Panc1 (cell line): ENCODE measurements at regions of chr6 and their contacts with region 1.

Region 1: DNA sequence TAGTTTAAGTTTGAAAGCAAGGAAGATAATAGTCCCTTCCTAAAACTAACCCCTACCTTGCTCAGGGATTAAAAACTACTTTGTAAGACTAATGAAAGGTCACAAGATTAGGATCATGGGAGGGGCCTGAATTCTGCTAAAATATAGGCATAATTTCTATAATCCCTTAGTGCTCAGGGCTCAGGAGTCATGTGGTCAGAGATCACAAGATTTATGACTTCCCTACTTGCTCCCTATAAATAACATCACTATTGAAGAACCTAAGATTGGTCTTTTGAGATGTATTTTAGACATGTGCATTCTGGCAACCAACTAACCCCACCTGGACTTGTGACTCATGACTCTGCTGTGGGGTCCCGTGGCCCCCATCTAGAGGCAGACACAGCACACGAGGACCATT is 81.1 kb downstream of the STMND1 start:
- DNase-seq: no peak
- ATAC-seq: no peak
- H3K4me3 ChIP-seq: no peak overlapping the region
- H3K27ac ChIP-seq: no peak overlapping the region
- H3K4me1 ChIP-seq: no peaks in the 10 kb centered on the region
- H3K27me3 ChIP-seq: no peaks in the 10 kb centered on the region
- CTCF ChIP-seq: no peak

Region 2: DNA sequence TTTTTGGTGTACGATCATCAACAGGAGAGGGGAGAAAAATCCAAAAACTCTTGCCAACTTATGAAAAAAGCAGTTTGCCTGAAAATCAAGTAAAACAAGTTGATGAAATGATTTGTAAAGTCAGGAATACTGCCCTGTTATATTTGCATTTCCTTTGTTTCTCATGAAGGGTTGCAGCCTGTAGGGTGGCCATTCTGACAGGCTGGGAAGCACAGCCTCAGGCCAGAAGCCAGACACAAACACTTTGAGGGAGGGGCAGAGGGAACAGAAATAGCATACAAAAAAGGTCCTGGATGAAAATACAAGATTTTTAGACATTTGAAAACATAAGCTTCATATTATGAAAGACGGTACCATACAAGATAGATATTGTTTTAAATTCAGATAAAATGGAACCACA is 1629.9 kb before region 1 on chr6:
- CTCF ChIA-PET with region 1: interaction called, 10 read pairs
- POLR2A ChIA-PET with region 1: no interaction called
- in situ Hi-C with region 1: no loop called
- intact Hi-C with region 1: no loop called
- DNase-seq: no peak
- ATAC-seq: no peak
- H3K4me3 ChIP-seq: no peak overlapping the region
- H3K27ac ChIP-seq: no peak overlapping the region
- H3K4me1 ChIP-seq: no peaks in the 10 kb centered on the region
- H3K27me3 ChIP-seq: no peaks in the 10 kb centered on the region
- CTCF ChIP-seq: no peak

Region 3: GRCh38 chr6:16286148-16286522 is 896.8 kb before region 1 on chr6:
- CTCF ChIA-PET with region 1: no interaction called
- POLR2A ChIA-PET with region 1: no interaction called
- in situ Hi-C with region 1: no loop called
- intact Hi-C with region 1: no loop called
- DNase-seq: peak; percentile 28
- ATAC-seq: peak; percentile 71
- H3K4me3 ChIP-seq: no peak overlapping the region
- H3K27ac ChIP-seq: no peak overlapping the region
- H3K4me1 ChIP-seq: no peaks in the 10 kb centered on the region
- H3K27me3 ChIP-seq: no peaks in the 10 kb centered on the region
- CTCF ChIP-seq: peak; percentile 91

Region 4: DNA sequence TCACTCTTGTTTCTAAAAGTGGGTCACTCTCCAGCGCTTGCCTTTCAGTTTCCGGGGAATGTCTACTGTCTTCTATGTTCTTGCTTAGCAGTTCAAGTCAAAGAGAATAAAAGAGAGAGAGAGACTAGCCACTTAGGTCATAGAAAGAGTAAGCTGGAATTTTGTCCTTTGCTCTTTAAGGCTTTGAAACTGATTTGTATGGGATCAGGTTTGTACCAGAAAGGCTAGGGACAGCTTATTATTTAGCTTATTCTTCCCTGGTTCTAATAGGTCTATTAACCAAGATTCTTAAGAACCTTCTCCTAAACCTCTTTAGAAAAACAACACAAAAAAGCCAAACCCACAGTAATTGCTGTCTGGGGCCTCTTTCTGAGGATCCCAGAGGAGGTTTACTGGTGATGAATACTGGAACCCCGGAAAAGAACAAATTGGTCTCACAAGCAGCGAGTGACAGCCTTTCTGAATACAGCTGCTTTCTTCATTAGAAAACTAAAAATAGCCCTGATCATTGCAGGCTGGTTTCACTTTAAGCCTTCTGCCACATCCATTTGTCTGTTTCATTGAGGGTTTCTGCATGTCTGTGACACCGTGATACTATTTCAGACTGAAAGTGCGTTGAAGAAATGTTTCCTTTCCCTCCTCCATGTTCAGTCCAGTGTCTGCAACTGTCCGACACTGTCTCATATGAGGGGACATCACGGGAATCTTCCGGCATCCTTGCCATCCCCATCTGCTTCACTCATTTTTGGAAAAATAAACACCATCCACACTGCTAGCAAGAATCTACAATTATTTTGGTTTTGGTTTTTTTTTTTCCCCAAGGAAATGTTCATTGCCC is 346.6 kb before region 1 on chr6:
- CTCF ChIA-PET with region 1: no interaction called
- POLR2A ChIA-PET with region 1: no interaction called
- in situ Hi-C with region 1: no loop called
- intact Hi-C with region 1: no loop called
- DNase-seq: no peak
- ATAC-seq: no peak
- H3K4me3 ChIP-seq: no peak overlapping the region
- H3K27ac ChIP-seq: no peak overlapping the region
- H3K4me1 ChIP-seq: no peaks in the 10 kb centered on the region
- H3K27me3 ChIP-seq: no peaks in the 10 kb centered on the region
- CTCF ChIP-seq: no peak